Heart right ventricle (tissue), 16 donors: ENCODE measurements at regions of chr9 and their contacts with region 1.

Region 1: DNA sequence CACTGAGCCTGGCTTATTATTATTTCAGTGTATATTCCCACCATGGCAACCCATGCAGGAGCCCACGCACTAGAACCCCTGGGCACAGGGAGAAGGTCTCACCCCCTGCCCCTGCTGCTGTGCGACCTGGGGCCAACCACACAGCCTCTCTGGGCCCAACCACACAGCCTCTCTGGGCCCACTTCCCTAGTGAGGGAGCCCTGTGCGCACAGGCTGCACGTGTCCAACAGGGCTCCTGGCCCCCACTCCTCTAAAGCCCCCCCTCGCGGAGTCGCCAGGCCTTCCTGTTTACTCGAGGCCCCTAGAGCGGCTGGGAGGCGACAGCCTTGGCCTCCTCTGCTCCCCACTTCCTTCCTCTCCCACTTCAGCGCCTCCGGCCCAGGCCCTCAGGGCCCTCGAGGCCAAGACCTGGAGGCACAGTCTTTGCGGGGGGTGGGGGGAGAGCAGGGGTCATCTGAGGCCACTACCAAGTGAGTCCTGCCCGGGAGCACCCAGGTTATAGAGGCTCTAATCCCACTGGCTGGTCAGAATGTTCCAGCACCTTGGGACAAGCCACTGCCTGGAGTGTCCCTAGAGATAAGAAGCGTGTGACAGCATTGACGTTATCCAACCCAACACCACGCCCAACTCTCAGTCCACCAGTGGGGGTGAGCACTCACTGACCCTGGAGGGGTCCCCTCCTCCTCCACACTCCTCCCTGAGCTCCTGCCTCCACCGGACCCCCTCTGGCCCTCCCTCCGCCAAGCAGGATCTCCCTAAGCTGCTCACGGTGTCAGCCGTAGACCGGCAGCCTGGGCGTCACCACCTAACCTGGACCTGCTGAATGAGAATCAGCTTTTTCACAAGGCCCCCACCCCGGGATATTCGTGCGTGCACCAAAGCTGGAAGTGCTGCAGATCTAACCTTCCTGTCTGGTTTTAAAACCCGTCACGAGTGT is 7.9 kb upstream of the ENG start:
- DNase-seq: peak; percentile 89 to 93
- ATAC-seq: peak; percentile 74 to 88 (median 84)
- H3K4me3 ChIP-seq: peak overlapping the region in 3 of 10 donors; percentile 5 to 15 (median 8)
- H3K27ac ChIP-seq: peak overlapping the region; percentile 80 to 99 (median 92)
- H3K4me1 ChIP-seq: peaks cover 41 to 81% (median 71%) of the 10 kb centered on the region in 9 donors
- H3K27me3 ChIP-seq: no peaks in the 10 kb centered on the region
- CTCF ChIP-seq: no peak

Region 2: GRCh38 chr9:127763918-127764384 is 98.4 kb before region 1 on chr9:
- intact Hi-C with region 1: loop called in 1 of 10 experiments (anchors 5 kb)
- DNase-seq: peak; percentile 73 to 85
- ATAC-seq: peak; percentile 60 to 86 (median 76)
- H3K4me3 ChIP-seq: peak overlapping the region in 1 of 10 donors; percentile 54
- H3K27ac ChIP-seq: peak overlapping the region; percentile 73 to 97 (median 88)
- H3K4me1 ChIP-seq: peaks cover 13 to 99% (median 81%) of the 10 kb centered on the region in 9 donors
- H3K27me3 ChIP-seq: peaks cover 0 to 4% (median 0%) of the 10 kb centered on the region in 7 donors
- CTCF ChIP-seq: peak; percentile 20 to 66 (median 55)

Region 3: GRCh38 chr9:127802576-127803443 is 59.5 kb before region 1 on chr9 and contains the start of gene FPGS:
- intact Hi-C with region 1: no loop called
- DNase-seq: peak; percentile 88 to 91
- ATAC-seq: peak; percentile 91 to 96 (median 94)
- H3K4me3 ChIP-seq: peak within 1 kb of the TSS; percentile 53 to 79 (median 70)
- H3K27ac ChIP-seq: peak within 1 kb of the TSS; percentile 81 to 98 (median 93)
- H3K4me1 ChIP-seq: peaks cover 8 to 38% (median 22%) of the 10 kb centered on the region in 9 donors
- H3K27me3 ChIP-seq: no peaks in the 10 kb centered on the region
- CTCF ChIP-seq: no peak
- total RNA-seq, gene FPGS: 40.2 to 58.5 (median 46.5) TPM

Region 4: DNA sequence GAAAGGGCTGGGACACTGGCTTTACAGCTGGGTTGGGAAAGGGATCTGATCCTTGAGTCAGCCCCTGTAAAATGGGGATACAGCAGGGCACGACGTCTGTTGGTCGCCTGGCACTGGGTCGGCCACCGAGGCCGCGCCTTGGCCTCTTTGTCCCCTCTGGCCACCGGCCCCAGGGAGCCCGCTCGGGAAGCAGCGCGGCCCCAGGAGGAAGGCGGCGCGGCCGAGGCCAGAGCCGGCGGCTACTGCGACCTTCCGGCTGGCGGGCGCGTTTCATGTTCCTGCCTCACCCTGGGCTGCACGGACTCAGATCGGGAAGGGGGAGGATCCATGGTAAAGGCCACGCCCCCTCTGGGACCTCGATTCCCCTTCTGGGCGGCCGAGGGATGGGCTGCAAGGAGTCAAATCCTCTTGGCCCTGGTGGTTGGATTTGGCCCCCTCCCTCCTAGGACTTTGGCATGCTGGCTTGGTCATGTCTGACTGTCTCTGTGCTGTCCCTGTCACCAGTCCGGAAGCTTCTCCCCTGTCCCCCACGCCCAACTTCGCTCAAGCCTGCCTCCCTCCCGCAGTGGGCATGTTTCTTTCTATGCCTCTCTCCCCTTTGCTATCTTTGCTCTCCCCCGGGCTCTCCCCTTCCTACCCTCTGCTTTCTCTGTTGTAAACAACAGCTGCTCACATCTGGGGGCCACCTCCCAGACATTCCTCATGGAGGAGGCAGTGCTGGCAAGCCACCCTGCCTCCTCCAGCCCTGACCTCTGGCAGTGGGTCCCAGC is 33.9 kb before region 1 on chr9:
- intact Hi-C with region 1: loop called in 4 of 10 experiments (anchors 5 kb)
- DNase-seq: peak; percentile 91 to 94
- ATAC-seq: peak; percentile 77 to 91 (median 87)
- H3K4me3 ChIP-seq: peak overlapping the region in 8 of 10 donors; percentile 12 to 38 (median 32)
- H3K27ac ChIP-seq: peak overlapping the region; percentile 77 to 99 (median 87)
- H3K4me1 ChIP-seq: peaks cover 19 to 80% (median 68%) of the 10 kb centered on the region in 9 donors
- H3K27me3 ChIP-seq: no peaks in the 10 kb centered on the region
- CTCF ChIP-seq: peak in 3 of 9 donors; percentile 12 to 35 (median 33)

Region 5: DNA sequence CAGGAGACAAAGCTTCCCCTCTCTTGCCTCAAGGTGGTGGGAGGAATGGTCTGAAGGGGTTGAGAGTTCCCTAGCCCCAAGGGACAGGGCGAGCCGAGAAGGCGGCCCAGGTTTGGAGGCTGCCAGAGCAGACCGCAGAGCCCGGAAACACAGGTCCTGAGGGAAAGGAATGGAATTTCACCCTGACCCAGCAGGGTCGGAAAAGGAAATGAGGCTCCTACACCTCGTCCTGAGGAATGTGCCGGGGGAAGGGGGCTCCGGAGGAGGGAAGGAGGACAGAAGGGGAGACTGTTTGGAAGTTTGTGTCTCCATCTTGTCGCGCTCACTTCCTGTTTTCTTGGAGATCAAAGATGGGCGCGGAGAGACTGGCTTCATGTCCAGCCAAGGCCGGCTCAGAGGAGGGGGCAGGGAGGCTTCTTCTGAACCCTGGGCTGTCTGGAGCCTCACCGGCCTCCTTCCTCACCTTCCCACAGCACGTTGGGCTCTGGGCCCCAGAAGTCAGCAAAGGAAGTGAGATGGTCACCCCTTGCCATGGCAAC is 17.5 kb before region 1 on chr9:
- intact Hi-C with region 1: loop called in 1 of 10 experiments (anchors 2 kb)
- DNase-seq: peak; percentile 61 to 74
- ATAC-seq: peak; percentile 48 to 69 (median 66)
- H3K4me3 ChIP-seq: peak overlapping the region in 6 of 10 donors; percentile 11 to 90 (median 75)
- H3K27ac ChIP-seq: peak overlapping the region; percentile 61 to 99 (median 94)
- H3K4me1 ChIP-seq: peaks cover 13 to 100% (median 63%) of the 10 kb centered on the region in 9 donors
- H3K27me3 ChIP-seq: no peaks in the 10 kb centered on the region
- CTCF ChIP-seq: no peak